Left cardiac atrium (tissue), 4 donors: ENCODE measurements at regions of chr5 and their contacts with region 1.

Region 1: DNA sequence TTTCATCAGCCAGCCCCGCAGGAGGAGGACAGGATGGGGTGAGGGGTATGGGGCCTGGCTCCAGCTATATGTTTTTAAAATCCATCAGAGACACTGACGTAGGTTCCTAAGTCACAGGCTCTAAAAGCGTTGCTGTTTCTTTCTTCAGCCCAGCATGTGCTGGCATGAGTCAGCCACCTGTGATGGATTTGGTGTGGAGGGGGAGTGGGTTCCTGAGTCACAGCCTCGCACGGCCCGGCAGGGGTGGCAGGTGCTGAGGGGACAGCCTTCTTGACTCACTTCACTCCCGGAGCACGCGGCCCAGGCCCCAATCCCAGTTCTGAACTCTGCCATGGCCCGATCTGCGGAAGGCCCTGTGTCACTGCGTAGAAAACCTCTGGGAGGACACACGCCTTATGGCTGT is 38.8 kb upstream of the RPL26L1 start:
- DNase-seq: no peak
- ATAC-seq: peak in 1 of 2 donors; percentile 58

Region 2: DNA sequence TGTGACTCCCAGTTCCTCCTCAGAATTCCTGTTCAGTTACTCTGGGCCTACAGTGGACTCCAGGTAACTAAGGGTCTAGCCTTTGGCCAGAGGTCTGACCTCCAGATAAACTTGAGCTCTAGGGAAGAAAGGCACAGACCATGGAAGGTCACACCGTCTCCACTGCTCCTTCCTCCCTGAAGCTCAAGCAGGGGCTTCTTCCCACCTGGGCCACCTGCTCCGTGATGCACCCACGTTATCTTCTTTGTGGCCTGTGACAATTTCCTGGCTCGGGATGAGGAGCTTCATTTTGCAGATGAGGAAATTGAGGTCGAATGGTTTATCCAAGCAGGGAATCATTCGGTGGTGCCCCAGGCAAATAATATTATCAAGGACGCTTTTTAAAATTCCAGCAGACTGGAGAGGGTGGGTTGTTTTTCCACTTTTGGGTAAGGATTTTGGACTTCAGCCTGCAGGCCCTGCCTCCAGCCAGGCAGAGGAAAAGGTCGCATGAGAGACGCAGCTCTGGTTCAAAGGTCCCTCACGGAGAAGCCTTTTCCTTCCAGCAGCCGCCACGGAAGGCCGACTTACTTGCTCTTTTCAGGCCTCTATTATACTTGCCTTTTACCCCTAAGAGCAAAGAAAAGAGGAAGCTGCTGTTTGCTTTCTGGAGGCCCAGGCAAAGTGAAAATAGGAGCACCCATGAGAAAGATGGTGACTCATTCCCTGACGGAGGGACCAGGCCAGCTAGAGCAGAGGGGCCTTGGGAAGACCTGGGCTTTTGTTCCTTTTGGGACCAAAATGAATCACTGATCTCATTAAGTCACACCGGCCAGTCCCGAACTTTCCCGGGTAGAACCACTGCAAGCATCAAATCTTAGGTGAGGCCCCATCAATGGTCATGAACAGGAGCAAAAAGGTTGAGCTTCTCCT is 126.6 kb before region 1 on chr5:
- intact Hi-C with region 1: loop called in 1 of 2 experiments (anchors 5 kb)
- DNase-seq: peak; percentile 37
- ATAC-seq: no peak

Region 3: GRCh38 chr5:172820046-172820767 is 100.2 kb before region 1 on chr5:
- intact Hi-C with region 1: loop called in 1 of 2 experiments (anchors 10 kb)
- DNase-seq: peak; percentile 70
- ATAC-seq: peak; percentile 57 to 80

Region 4: DNA sequence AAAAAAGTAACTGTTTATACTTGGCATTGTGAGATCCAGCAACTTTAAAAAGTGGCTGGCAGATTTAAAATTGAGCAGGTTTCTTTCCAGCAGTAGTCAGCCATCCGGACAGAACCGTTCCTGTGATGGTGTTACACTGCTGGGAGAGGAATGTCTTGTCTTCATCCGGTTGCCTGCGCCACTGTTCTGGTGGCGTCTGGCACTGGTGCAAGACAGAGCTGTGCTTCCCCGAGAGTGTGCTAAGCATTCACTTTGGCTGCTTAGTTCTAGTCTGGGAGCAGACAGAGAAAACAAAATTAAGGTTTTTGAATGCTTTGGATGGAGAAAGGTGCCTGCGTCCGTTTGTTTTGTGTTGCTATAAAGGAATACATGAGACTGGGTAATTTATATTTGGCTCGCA is 100.2 kb after region 1 on chr5:
- intact Hi-C with region 1: no loop called
- DNase-seq: peak; percentile 31
- ATAC-seq: peak; percentile 72 to 77